Activated CD8-positive, alpha-beta memory T cell treated with anti-CD3 and anti-CD28 coated beads, Interleukin-2, amount 10 ng/mL, durations not matched to agents 7 days and 5 days (primary cell): ENCODE measurements at regions of chr6 and their contacts with region 1.

Region 1: GRCh38 chr6:11575408-11576033 is 38.0 kb downstream of the TMEM170B start:
- DNase-seq: peak; percentile 72
- ATAC-seq: peak; percentile 99
- H3K4me3 Mint-ChIP-seq: no peak overlapping the region
- H3K27ac Mint-ChIP-seq: no peak overlapping the region
- H3K4me1 Mint-ChIP-seq: no peaks in the 10 kb centered on the region
- H3K27me3 Mint-ChIP-seq: no peaks in the 10 kb centered on the region

Region 2: GRCh38 chr6:11144393-11144851 is 431.1 kb before region 1 on chr6:
- CTCF ChIA-PET with region 1: interaction called, 16 read pairs
- DNase-seq: peak; percentile 88
- ATAC-seq: peak; percentile 97
- H3K4me3 Mint-ChIP-seq: no peak overlapping the region
- H3K27ac Mint-ChIP-seq: peak overlapping the region; percentile 13
- H3K4me1 Mint-ChIP-seq: peaks cover 5% of the 10 kb centered on the region
- H3K27me3 Mint-ChIP-seq: no peaks in the 10 kb centered on the region